Psoas muscle (tissue), 8 donors: ENCODE measurements at regions of chr14 and their contacts with region 1.

Region 1: GRCh38 chr14:31622060-31622459 is 60.9 kb downstream of the NUBPL start:
- DNase-seq: no peak
- ATAC-seq: no peak
- H3K4me3 ChIP-seq: no peak overlapping the region
- H3K27ac ChIP-seq: no peak overlapping the region
- H3K4me1 ChIP-seq: no peaks in the 10 kb centered on the region
- H3K27me3 ChIP-seq: no peaks in the 10 kb centered on the region
- CTCF ChIP-seq: no peak

Region 2: GRCh38 chr14:32038876-32039275 is 416.8 kb after region 1 on chr14:
- intact Hi-C with region 1: loop called in 1 of 2 experiments (anchors 10 kb)
- DNase-seq: no peak
- ATAC-seq: no peak
- H3K4me3 ChIP-seq: no peak overlapping the region
- H3K27ac ChIP-seq: no peak overlapping the region
- H3K4me1 ChIP-seq: no peaks in the 10 kb centered on the region
- H3K27me3 ChIP-seq: no peaks in the 10 kb centered on the region
- CTCF ChIP-seq: no peak